ENCODE measurements at regions of chr5 and their contacts with region 1.

Region 1: GRCh38 chr5:82351754-82352145 is 73.6 kb upstream of the RPS23 start:
- DNase-seq: peak; percentile 89
- ATAC-seq: peak; percentile 89
- H3K4me3 ChIP-seq: no peak overlapping the region
- H3K27ac ChIP-seq: no peak overlapping the region
- H3K4me1 ChIP-seq: peaks cover 19% of the 10 kb centered on the region
- H3K27me3 ChIP-seq: no peaks in the 10 kb centered on the region
- CTCF ChIP-seq: peak; percentile 90
- POLR2A ChIP-seq: 0 out of 2 replicates have a peak, but pooled peaks have one; percentile 47
- RAD21 ChIP-seq: peak; percentile 93

Region 2: DNA sequence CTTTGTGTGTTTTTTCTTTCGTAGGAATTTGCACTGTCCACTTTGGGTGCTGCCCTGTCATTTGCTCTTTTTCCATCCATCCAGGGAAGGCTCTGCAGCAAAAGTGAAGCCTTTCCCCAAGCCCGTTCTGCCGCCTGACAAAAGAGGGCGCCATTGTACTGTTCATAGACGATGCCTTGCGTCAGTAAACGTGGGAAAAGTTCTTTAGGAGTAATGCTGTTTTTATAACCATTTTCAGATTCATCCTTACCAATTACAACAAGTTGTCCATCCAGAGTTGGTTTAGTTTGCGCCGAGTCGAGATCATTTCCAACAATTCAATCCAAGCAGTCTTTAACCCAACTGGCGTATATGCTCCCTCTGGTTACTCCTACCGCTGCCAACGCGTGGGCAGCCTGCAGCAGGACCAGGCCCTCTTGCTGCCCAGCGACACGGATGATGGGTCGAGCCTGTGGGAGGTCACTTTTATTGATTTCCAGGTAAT is 39.3 kb before region 1 on chr5:
- CTCF ChIA-PET with region 1: interaction called, 9 read pairs
- POLR2A ChIA-PET with region 1: no interaction called
- dilution Hi-C with region 1: no loop called
- in situ Hi-C with region 1: no loop called
- intact Hi-C with region 1: loop called (anchors 2 kb)
- DNase-seq: peak; percentile 83
- ATAC-seq: peak; percentile 85
- H3K4me3 ChIP-seq: no peak overlapping the region
- H3K27ac ChIP-seq: no peak overlapping the region
- H3K4me1 ChIP-seq: peaks cover 6% of the 10 kb centered on the region; the same call in 1 of the 2 replicates
- H3K27me3 ChIP-seq: no peaks in the 10 kb centered on the region
- CTCF ChIP-seq: peak; percentile 98
- POLR2A ChIP-seq: peak; percentile 26; the same call in 1 of the 2 replicates
- RAD21 ChIP-seq: peak; percentile 98

Region 3: GRCh38 chr5:82641331-82642003 is 289.7 kb after region 1 on chr5:
- CTCF ChIA-PET with region 1: no interaction called
- POLR2A ChIA-PET with region 1: no interaction called
- dilution Hi-C with region 1: no loop called
- in situ Hi-C with region 1: no loop called
- intact Hi-C with region 1: loop called (anchors 2 kb)
- DNase-seq: peak; percentile 81
- ATAC-seq: peak; percentile 79
- H3K4me3 ChIP-seq: no peak overlapping the region
- H3K27ac ChIP-seq: no peak overlapping the region
- H3K4me1 ChIP-seq: no peaks in the 10 kb centered on the region
- H3K27me3 ChIP-seq: no peaks in the 10 kb centered on the region
- CTCF ChIP-seq: peak; percentile 79
- POLR2A ChIP-seq: no peak
- RAD21 ChIP-seq: peak; percentile 72

Region 4: GRCh38 chr5:82799361-82800080 is 447.8 kb after region 1 on chr5:
- CTCF ChIA-PET with region 1: no interaction called
- POLR2A ChIA-PET with region 1: no interaction called
- dilution Hi-C with region 1: no loop called
- in situ Hi-C with region 1: loop called (anchors 25 kb)
- intact Hi-C with region 1: loop called (anchors 2 kb)
- DNase-seq: no peak
- ATAC-seq: no peak
- H3K4me3 ChIP-seq: no peak overlapping the region
- H3K27ac ChIP-seq: no peak overlapping the region
- H3K4me1 ChIP-seq: no peaks in the 10 kb centered on the region
- H3K27me3 ChIP-seq: no peaks in the 10 kb centered on the region; the same call in 1 of the 2 replicates
- CTCF ChIP-seq: no peak
- POLR2A ChIP-seq: no peak
- RAD21 ChIP-seq: no peak

Region 5: DNA sequence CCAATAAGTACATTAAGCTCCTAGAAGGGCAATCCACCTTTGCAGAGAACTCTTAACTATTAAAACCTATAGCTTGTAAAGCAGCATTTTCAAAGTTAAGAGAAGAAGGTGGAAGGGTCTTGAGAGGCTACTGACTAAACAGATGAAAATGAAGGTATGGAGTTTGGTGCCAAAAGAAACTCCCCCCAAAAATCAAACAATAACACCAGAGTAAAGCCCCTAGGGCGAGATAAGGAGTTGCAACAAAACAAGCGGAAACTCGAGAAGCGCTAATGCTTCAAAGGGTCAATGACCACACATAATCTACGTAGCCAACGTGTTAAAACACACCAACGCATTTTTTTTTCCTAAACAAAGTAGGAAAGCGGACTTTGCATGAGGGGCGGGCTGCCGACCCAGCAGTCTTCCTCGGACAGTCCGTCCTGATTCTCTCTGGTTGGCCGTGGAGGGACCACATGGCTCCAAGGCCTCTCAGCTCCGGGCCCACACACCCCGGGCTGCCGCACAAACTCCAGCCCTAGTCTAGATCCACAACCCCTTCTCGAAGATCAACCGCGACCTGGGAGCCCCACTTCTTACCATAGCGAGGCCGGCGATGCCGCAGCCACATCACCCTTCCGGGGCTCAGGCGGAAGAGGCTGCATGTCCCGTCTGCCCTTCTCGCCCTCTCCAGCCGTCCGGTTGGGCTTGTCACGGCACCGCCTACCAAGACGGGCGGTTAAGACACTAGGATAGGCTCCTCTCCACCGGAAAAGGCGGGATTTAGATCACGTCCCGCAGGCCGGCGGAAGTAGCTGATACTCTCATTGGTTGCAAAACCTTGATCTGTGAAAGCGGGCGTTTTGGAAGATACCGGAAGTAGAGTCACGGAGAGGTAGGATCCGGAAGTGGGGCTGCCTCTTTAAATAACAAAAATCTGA is 725.3 kb after region 1 on chr5 and contains the starts of genes TMEM167A and XRCC4:
- CTCF ChIA-PET with region 1: no interaction called
- POLR2A ChIA-PET with region 1: no interaction called
- dilution Hi-C with region 1: no loop called
- in situ Hi-C with region 1: loop called (anchors 25 kb)
- intact Hi-C with region 1: loop called (anchors 5 kb)
- DNase-seq: peak; percentile 99
- ATAC-seq: peak; percentile 100
- H3K4me3 ChIP-seq: peak within 1 kb of the TSS; percentile 79
- H3K27ac ChIP-seq: peak within 1 kb of the TSS; percentile 88
- H3K4me1 ChIP-seq: peaks cover 3% of the 10 kb centered on the region; the same call in 1 of the 2 replicates
- H3K27me3 ChIP-seq: no peaks in the 10 kb centered on the region
- CTCF ChIP-seq: no peak
- POLR2A ChIP-seq: peak; percentile 95
- RAD21 ChIP-seq: no peak
- total RNA-seq, gene TMEM167A: 34.6 and 95.8 TPM in 2 replicates
- total RNA-seq, gene XRCC4: 4.7 and 11.7 TPM in 2 replicates

Region 6: GRCh38 chr5:83473346-83474163 is 1121.8 kb after region 1 on chr5:
- CTCF ChIA-PET with region 1: no interaction called
- POLR2A ChIA-PET with region 1: no interaction called
- dilution Hi-C with region 1: no loop called
- in situ Hi-C with region 1: loop called (anchors 10 kb)
- intact Hi-C with region 1: loop called (anchors 1 kb)
- DNase-seq: peak; percentile 98
- ATAC-seq: peak; percentile 78
- H3K4me3 ChIP-seq: peak overlapping the region; percentile 56
- H3K27ac ChIP-seq: peak overlapping the region; percentile 82
- H3K4me1 ChIP-seq: peaks cover 3% of the 10 kb centered on the region
- H3K27me3 ChIP-seq: peaks cover under 1% of the 10 kb centered on the region
- CTCF ChIP-seq: peak; percentile 92
- POLR2A ChIP-seq: no peak
- RAD21 ChIP-seq: peak; percentile 85

Region 7: GRCh38 chr5:83712001-83712601 is 1360.4 kb after region 1 on chr5:
- CTCF ChIA-PET with region 1: no interaction called
- POLR2A ChIA-PET with region 1: no interaction called
- dilution Hi-C with region 1: no loop called
- in situ Hi-C with region 1: no loop called
- intact Hi-C with region 1: loop called (anchors 2 kb)
- DNase-seq: peak; percentile 35
- ATAC-seq: peak; percentile 74
- H3K4me3 ChIP-seq: no peak overlapping the region
- H3K27ac ChIP-seq: no peak overlapping the region
- H3K4me1 ChIP-seq: peaks cover 3% of the 10 kb centered on the region
- H3K27me3 ChIP-seq: peaks cover 8% of the 10 kb centered on the region
- CTCF ChIP-seq: peak; percentile 63
- POLR2A ChIP-seq: no peak
- RAD21 ChIP-seq: peak; percentile 63

Measured in IMR-90 (cell line).